Activated naive CD8-positive, alpha-beta T cell treated with anti-CD3 and anti-CD28 coated beads, Interleukin-2, amount 10 ng/mL, durations not matched to agents 7 days and 5 days (primary cell): ENCODE measurements at regions of chr7 and their contacts with region 1.

Region 1: DNA sequence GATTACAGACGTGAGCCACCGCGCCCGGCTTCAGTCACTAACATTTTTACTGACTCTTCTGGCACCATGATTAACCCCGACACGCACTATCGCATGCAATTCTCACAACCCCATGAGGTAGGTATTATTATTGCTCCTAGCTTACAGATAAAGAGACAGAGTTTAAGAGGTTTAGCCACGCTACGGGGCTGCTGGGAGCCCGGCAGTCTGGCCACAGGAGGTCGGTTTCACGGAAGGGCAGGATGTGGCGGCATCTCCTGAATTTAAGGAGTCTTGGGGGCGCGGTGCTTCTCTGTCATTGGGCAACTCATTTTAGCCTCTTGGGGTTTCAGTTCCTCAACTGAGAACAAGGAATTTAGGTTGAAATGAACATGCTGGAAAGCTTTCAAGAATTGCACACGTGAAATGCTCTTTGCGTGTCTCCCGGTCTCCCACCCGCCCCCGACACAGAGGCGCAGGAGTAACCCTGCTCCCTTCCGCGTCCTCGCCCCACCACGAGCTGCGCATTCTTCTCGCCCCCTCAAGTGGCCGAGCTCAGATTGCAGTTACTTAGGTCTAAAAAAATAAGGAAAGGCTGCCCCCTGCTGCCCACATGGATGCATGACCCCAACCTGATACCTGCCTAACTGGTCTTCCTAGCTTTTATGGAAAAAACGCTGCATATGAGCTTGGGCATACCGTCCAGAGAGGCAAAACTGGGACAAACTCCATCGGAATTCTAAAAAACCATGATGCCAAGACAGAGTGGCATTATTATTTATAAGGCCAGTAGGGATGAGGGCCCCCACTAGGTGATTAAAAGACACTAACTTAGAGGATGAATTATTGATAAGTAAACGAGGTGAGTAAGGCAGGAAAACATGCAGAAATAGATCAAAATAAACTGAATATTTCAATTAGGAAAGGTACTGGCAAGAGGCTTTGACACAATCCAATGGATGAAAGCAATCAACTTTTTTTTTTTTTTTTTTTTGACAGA is 12.4 kb downstream of the PRSS2 start:
- DNase-seq: peak; percentile 73
- ATAC-seq: peak; percentile 49
- H3K4me3 Mint-ChIP-seq: peak overlapping the region; percentile 81
- H3K27ac Mint-ChIP-seq: peak overlapping the region; percentile 87
- H3K4me1 Mint-ChIP-seq: peaks cover 8% of the 10 kb centered on the region
- H3K27me3 Mint-ChIP-seq: no peaks in the 10 kb centered on the region

Region 2: DNA sequence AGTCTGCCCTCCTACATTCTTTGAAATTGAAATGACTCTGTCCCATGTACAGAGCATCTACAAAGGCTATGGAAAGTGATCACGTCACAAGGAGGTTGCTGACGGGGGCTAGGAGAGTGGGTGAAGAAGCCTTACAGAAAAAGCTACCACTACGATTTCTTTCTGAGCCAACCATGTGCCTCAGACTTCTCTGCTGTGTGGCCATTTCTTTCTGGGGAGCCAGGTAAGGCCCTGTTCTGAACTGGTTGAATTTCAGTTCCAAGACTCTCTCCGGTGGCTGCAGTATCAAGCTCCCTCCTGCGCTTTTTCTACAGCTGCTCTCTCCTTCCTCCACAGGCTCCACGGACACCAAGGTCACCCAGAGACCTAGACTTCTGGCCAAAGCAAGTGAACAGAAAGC is 146.5 kb before region 1 on chr7:
- POLR2A ChIA-PET with region 1: interaction called, 13 read pairs
- DNase-seq: no peak
- ATAC-seq: peak; percentile 61
- H3K4me3 Mint-ChIP-seq: peak overlapping the region; percentile 94
- H3K27ac Mint-ChIP-seq: peak overlapping the region; percentile 99
- H3K4me1 Mint-ChIP-seq: peaks cover 13% of the 10 kb centered on the region
- H3K27me3 Mint-ChIP-seq: peaks cover 6% of the 10 kb centered on the region